SK-N-SH (cell line): ENCODE measurements at regions of chr11 and their contacts with region 1.

Region 1: GRCh38 chr11:61967116-61967923 is at the start of gene FTH1:
- DNase-seq: peak; percentile 99
- H3K4me3 ChIP-seq: peak within 1 kb of the TSS; percentile 99
- H3K27ac ChIP-seq: peak within 1 kb of the TSS; percentile 94 to 97
- H3K4me1 ChIP-seq: peaks cover 43 to 52% of the 10 kb centered on the region in 2 experiments
- H3K27me3 ChIP-seq: no peaks in the 10 kb centered on the region
- CTCF ChIP-seq: no peak
- EP300 ChIP-seq: peak; percentile 8 to 29; a peak in 2 of 4 replicates
- RAD21 ChIP-seq: no peak
- polyA plus RNA-seq, gene FTH1: 879 and 1,229 TPM in 2 replicates

Region 2: DNA sequence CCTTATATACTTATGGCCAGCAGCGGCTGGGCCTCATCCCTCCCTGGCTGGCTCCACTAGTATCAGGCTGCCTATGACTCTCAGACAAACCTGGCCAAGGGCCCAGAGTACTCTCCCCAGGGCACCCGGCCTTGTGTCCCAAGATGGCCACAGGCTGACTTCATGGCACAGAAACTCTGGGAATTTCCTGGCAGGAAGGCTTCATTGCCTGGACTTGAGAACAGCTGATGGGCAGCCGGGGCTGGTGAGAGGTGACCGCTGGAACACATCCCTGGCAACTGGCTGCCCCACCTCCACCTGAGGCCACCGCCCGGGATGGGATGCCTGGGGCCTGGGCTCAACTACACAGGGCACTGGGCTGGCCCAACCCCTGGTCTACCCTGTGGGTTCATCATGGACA is 79.3 kb before region 1 on chr11:
- CTCF ChIA-PET with region 1: no interaction called
- POLR2A ChIA-PET with region 1: no interaction called
- DNase-seq: no peak
- H3K4me3 ChIP-seq: peak overlapping the region in 1 of 2 experiments; percentile 19; a peak in 1 of 4 replicates
- H3K27ac ChIP-seq: peak overlapping the region in 1 of 2 experiments; percentile 52; a peak in 2 of 4 replicates
- H3K4me1 ChIP-seq: peaks cover 7 to 14% of the 10 kb centered on the region in 2 experiments; a peak in 3 of 4 replicates
- H3K27me3 ChIP-seq: no peaks in the 10 kb centered on the region
- CTCF ChIP-seq: no peak
- EP300 ChIP-seq: peak in 1 of 2 experiments; percentile 60; a peak in 1 of 4 replicates
- RAD21 ChIP-seq: no peak

Region 3: GRCh38 chr11:61923166-61924063 is 43.9 kb before region 1 on chr11:
- CTCF ChIA-PET with region 1: no interaction called
- POLR2A ChIA-PET with region 1: interaction called, 12 read pairs
- DNase-seq: peak; percentile 61
- H3K4me3 ChIP-seq: no peak overlapping the region
- H3K27ac ChIP-seq: peak overlapping the region; percentile 49 to 93; a peak in 2 of 4 replicates
- H3K4me1 ChIP-seq: peaks cover 20 to 34% of the 10 kb centered on the region in 2 experiments
- H3K27me3 ChIP-seq: no peaks in the 10 kb centered on the region
- CTCF ChIP-seq: no peak
- EP300 ChIP-seq: no peak
- RAD21 ChIP-seq: no peak

Region 4: GRCh38 chr11:61954851-61955421 is 12.4 kb before region 1 on chr11:
- CTCF ChIA-PET with region 1: interaction called, 7 read pairs
- POLR2A ChIA-PET with region 1: interaction called, 76 read pairs
- DNase-seq: no peak
- H3K4me3 ChIP-seq: no peak overlapping the region
- H3K27ac ChIP-seq: no peak overlapping the region
- H3K4me1 ChIP-seq: peaks cover 1 to 5% of the 10 kb centered on the region in 2 experiments; a peak in 2 of 4 replicates
- H3K27me3 ChIP-seq: no peaks in the 10 kb centered on the region
- CTCF ChIP-seq: no peak
- EP300 ChIP-seq: no peak
- RAD21 ChIP-seq: no peak

Region 5: DNA sequence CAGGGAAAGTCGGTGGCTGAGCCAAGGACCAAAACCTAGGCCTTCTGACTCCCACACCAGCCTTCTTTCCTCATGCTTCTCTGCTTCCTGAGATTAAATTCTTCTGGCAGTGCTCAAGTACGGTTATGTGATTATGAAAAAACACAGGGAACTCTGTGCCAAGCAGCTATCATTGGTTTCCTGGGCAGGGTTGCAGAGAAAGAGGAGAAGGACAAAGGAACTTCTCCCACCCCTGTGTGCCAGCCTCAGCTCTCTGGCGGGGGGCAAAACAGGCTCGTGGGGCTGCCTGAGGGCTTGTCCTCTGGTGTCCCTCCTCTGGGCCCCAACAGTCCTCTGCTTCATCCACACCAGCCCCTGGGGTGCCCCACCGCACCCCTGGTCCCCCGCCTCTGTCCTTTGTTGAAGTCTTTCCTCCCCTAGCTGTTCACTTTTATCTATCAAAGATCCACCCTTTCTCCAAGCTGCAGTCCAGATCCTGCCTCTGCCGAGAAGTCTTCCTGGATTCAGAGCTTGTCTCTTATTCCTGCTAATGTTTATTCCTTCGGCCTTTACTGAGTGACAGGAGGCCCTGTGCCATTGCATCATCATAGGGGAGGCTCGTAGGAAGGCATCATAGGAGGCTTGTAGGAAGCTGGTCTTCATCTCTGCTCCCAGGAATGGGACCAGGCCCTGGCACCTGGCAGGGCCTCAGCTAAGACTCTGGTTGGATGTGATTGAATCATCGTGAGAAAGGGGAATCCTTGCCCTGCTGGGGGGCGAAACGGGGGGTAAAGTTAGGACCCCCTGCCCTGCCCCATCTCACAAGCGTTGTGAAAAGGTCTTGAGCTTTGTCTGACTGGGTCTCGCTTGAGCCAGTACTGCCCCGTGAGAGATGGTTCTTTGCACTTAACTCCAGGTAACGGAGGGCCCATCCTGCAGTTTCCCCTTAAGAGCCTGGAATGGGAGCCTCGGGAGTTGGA is 11.7 kb after region 1 on chr11:
- CTCF ChIA-PET with region 1: interaction called, 5 read pairs
- POLR2A ChIA-PET with region 1: interaction called, 14 read pairs
- DNase-seq: no peak
- H3K4me3 ChIP-seq: no peak overlapping the region
- H3K27ac ChIP-seq: peak overlapping the region; percentile 40 to 63
- H3K4me1 ChIP-seq: peaks cover 7 to 14% of the 10 kb centered on the region in 2 experiments; a peak in 3 of 4 replicates
- H3K27me3 ChIP-seq: no peaks in the 10 kb centered on the region
- CTCF ChIP-seq: no peak
- EP300 ChIP-seq: no peak
- RAD21 ChIP-seq: no peak